ENCODE measurements at regions of chr19 and their contacts with region 1.

Region 1: GRCh38 chr19:53037101-53038097 is 7.1 kb upstream of the ERVV-2 start:
- DNase-seq: peak; percentile 42
- H3K4me3 ChIP-seq: peak overlapping the region; percentile 43 to 86 (median 72)
- H3K27ac ChIP-seq: peak overlapping the region; percentile 15
- H3K4me1 ChIP-seq: no peaks in the 10 kb centered on the region
- H3K27me3 ChIP-seq: no peaks in the 10 kb centered on the region
- CTCF ChIP-seq: no peak
- POLR2A ChIP-seq: peak; percentile 50

Region 2: DNA sequence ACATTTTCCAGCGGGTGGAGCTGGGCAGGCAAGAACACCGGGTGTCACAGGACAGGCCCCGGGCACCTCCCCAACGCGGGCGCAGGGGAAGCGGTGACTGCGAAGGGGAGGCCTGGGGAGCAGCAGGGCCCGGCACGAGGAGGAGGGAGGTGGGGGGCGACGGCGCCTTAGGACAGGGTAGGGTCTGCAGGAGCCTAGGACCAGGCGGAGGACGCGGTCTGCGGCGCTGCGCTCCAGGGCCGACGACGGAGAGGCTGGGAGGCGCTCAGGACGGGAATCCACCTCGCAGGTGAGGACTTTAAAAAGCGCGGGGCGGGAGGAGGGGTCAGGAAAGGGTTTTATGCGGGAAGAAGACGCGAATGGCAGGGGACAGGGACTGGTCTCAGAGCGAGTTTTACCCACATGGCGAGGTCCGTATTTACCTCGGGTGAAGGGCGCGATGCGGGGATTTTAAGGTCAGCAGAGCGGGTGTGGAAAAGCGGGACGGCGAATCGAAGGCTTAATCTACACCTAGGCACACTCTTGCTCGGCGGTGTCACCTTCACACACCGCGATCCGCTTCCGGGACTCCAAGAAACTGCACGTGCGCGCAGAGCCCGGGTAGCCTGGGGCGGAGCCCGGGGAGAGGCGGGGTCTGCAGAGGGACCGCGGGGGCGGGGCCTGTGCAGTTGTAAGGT is 20.6 kb after region 1 on chr19:
- CTCF ChIA-PET with region 1: no interaction called
- POLR2A ChIA-PET with region 1: no interaction called
- dilution Hi-C with region 1: no loop called
- intact Hi-C with region 1: no loop called
- DNase-seq: no peak
- H3K4me3 ChIP-seq: peak overlapping the region in 1 of 3 experiments; percentile 4
- H3K27ac ChIP-seq: no peak overlapping the region
- H3K4me1 ChIP-seq: no peaks in the 10 kb centered on the region
- H3K27me3 ChIP-seq: peaks cover 0 to 2% of the 10 kb centered on the region in 2 experiments
- CTCF ChIP-seq: no peak
- POLR2A ChIP-seq: no peak

Region 3: GRCh38 chr19:53086949-53087348 is 49.5 kb after region 1 on chr19:
- CTCF ChIA-PET with region 1: no interaction called
- POLR2A ChIA-PET with region 1: no interaction called
- dilution Hi-C with region 1: no loop called
- intact Hi-C with region 1: loop called (anchors 1 kb)
- DNase-seq: peak; percentile 94
- H3K4me3 ChIP-seq: no peak overlapping the region
- H3K27ac ChIP-seq: peak overlapping the region; percentile 92
- H3K4me1 ChIP-seq: peaks cover 23% of the 10 kb centered on the region
- H3K27me3 ChIP-seq: no peaks in the 10 kb centered on the region
- CTCF ChIP-seq: no peak
- POLR2A ChIP-seq: peak; percentile 50

Region 4: GRCh38 chr19:53103198-53103944 is 66.0 kb after region 1 on chr19 and contains the start of gene ZNF160:
- CTCF ChIA-PET with region 1: no interaction called
- POLR2A ChIA-PET with region 1: no interaction called
- dilution Hi-C with region 1: no loop called
- intact Hi-C with region 1: no loop called
- DNase-seq: peak; percentile 98
- H3K4me3 ChIP-seq: peak within 1 kb of the TSS; percentile 79 to 93 (median 90)
- H3K27ac ChIP-seq: peak within 1 kb of the TSS; percentile 94
- H3K4me1 ChIP-seq: peaks cover 11% of the 10 kb centered on the region
- H3K27me3 ChIP-seq: no peaks in the 10 kb centered on the region
- CTCF ChIP-seq: no peak
- POLR2A ChIP-seq: peak; percentile 72
- total RNA-seq, gene ZNF160: 16.4 and 19.7 TPM in 2 replicates

Measured in endothelial cell of umbilical vein (primary cell).